ENCODE measurements at regions of chrX and their contacts with region 1.

Region 1: DNA sequence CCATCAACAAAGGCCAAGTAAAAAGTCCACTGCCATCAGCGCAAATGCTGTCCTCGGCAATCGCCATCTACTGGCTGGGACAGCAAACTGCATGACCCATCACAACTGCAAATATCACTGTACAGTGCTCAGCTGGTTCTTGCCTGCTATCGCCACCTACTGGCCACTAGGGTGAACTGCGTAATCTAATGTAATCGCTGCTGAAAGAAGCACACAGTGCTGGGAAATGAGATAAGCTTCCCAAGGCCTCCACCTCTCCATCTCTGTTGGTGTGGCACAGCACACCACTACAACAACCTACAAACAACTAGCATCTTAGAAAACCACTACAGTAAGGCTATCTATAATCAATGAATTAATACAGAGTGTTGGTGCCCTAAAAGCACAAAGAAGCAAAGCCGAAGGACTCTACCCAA is 298.3 kb downstream of the TEX13A start:
- DNase-seq: peak; percentile 61
- ATAC-seq: peak; percentile 68 to 74

Region 2: GRCh38 chrX:104668550-104668949 is 253.7 kb before region 1 on chrX:
- intact Hi-C with region 1: loop called (anchors 5 to 10 kb)
- DNase-seq: no peak
- ATAC-seq: no peak

Region 3: DNA sequence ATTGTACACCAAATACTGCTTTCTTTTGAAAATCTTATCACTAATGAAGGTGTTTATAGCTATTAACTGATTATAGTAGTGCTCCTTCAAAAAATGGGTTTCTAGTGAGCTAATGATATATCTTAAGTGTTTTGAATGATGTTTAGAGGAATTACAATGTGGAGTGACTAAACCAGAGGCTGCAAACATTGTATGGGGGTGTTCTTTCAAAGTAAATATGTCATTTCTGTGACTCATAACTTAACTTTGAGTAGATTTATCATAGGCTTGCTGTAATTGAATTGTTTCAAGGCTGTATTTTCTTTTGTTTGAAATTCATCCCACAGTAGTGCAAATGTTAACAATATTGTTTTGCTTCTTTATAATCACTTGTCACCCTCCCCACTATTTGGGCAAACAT is 214.6 kb before region 1 on chrX:
- intact Hi-C with region 1: no loop called
- DNase-seq: no peak
- ATAC-seq: no peak

Region 4: GRCh38 chrX:104789791-104790190 is 132.4 kb before region 1 on chrX:
- intact Hi-C with region 1: no loop called
- DNase-seq: no peak
- ATAC-seq: no peak

Measured in left cardiac atrium (tissue), 4 donors.